Kidney (tissue), 22 donors: ENCODE measurements at regions of chr12 and their contacts with region 1.

Region 1: GRCh38 chr12:90102957-90103652 is 394.5 kb upstream of the ATP2B1 start:
- DNase-seq: peak in 1 of 5 donors; percentile 42
- H3K4me3 ChIP-seq: no peak overlapping the region
- H3K27ac ChIP-seq: no peak overlapping the region
- H3K4me1 ChIP-seq: no peaks in the 10 kb centered on the region
- H3K27me3 ChIP-seq: no peaks in the 10 kb centered on the region
- CTCF ChIP-seq: peak; percentile 46

Region 2: DNA sequence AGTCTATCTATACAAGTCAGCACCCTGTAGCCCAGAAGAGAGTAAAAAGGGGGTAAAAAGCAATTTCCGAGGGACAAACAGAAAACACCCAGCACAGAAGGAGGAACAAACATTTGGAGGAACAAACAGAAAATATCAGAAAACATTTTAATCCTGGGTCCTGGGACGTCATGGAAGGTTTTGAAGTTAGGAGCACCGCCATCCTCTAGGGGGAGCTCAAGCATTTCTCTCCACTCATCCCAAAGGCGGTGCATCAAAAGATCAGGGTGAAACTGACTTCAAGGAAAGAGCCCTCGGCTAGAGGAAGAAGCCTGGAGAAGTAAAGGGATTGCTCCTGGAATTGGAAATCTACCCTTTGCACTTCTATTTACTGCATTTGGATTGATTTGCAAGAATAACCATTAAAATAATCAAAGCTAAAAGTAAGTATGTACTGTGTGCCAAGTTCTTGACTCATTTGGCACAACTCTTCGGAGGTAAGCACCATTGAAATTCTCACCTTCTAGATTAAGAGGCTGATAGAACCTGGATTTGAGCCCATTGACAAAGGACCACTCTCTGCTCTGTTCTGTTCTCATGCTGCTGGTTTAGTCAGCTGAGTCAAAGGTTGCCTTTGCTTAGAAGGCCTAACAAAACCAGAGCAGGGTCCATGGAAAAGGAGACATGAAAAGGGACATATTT is 560.1 kb before region 1 on chr12:
- intact Hi-C with region 1: loop called (anchors 10 kb)
- DNase-seq: peak in 4 of 5 donors; percentile 77 to 94 (median 87)
- H3K4me3 ChIP-seq: no peak overlapping the region
- H3K27ac ChIP-seq: no peak overlapping the region
- H3K4me1 ChIP-seq: peaks cover 0 to 17% (median 9%) of the 10 kb centered on the region in 3 donors
- H3K27me3 ChIP-seq: no peaks in the 10 kb centered on the region
- CTCF ChIP-seq: peak; percentile 85